ENCODE measurements at regions of chr11 and their contacts with region 1.

Region 1: GRCh38 chr11:107565219-107565937 is at the start of gene ALKBH8:
- DNase-seq: peak; percentile 74 to 86 (median 77)
- H3K4me3 ChIP-seq: peak within 1 kb of the TSS; percentile 68 to 73
- H3K4me3 Mint-ChIP-seq: peak within 1 kb of the TSS; percentile 94 to 98 (median 96)
- H3K27ac ChIP-seq: peak within 1 kb of the TSS; percentile 58
- H3K27ac Mint-ChIP-seq: peak within 1 kb of the TSS; percentile 89 to 97 (median 95)
- H3K4me1 ChIP-seq: peaks cover 28% of the 10 kb centered on the region
- H3K4me1 Mint-ChIP-seq: peaks cover 23 to 43% (median 40%) of the 10 kb centered on the region in 4 donors
- H3K27me3 ChIP-seq: no peaks in the 10 kb centered on the region
- H3K27me3 Mint-ChIP-seq: no peaks in the 10 kb centered on the region
- total RNA-seq, gene ALKBH8: 14.6 to 15.2 TPM

Region 2: DNA sequence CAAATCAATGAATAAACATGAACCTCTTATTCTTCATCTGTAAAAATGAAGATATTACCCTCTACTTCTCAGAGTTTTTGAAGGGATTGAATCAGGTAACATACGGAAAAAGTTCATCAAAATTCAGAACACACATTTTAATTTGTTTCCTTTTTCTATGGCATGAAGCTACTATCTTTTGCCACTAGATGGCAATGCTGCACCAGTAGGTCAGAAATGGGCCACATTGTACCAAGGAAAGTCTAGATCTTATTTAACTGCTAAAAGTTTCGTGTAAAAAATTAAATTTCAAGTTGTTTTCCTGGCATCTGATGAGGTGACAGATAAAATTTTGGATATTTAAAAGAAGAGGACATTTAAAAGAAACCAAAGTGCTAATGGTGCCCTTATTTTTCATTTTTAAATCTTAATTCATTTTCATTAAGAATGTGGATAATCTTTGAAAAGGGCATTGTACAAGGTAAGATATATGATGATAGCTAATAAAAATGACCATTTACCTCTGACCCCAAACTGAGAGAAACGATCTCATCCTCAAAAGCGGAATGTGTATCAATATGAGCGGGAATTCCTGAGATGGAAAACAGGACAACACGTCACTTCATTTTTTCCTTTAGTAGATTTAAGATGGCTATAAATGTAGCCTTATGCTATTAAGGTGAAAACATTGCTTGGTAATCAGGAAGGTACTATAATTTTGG is 16.0 kb before region 1 on chr11:
- CTCF ChIA-PET with region 1: interaction called, 76 read pairs
- POLR2A ChIA-PET with region 1: no interaction called
- intact Hi-C with region 1: no loop called
- DNase-seq: peak in 4 of 5 donors; percentile 32 to 43 (median 36)
- H3K4me3 ChIP-seq: no peak overlapping the region
- H3K4me3 Mint-ChIP-seq: no peak overlapping the region
- H3K27ac ChIP-seq: no peak overlapping the region
- H3K27ac Mint-ChIP-seq: no peak overlapping the region
- H3K4me1 ChIP-seq: no peaks in the 10 kb centered on the region
- H3K4me1 Mint-ChIP-seq: peaks cover 0 to 4% (median 0%) of the 10 kb centered on the region in 4 donors
- H3K27me3 ChIP-seq: no peaks in the 10 kb centered on the region
- H3K27me3 Mint-ChIP-seq: no peaks in the 10 kb centered on the region

Region 3: DNA sequence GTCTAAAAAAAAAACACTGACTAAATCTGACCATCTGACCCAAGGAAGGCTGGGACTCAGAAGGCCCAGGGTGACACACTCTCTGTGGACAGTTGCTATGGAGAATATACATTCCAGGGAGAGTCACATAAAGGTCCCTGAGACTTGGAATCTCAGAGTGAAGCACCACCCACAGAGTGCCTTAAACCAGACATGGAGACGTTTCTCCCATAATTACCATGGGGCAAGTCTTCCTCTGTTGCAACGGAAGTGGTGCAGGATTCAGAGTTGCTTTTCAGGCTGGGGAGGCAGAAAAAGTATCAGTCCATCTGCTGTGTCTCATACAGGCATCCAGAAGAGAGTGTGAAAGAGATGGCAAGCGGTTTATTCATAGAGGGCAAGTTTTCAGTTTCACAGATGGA is 205.2 kb after region 1 on chr11:
- CTCF ChIA-PET with region 1: interaction called, 7 read pairs
- POLR2A ChIA-PET with region 1: no interaction called
- intact Hi-C with region 1: loop called (anchors 1 kb)
- DNase-seq: no peak
- H3K4me3 ChIP-seq: no peak overlapping the region
- H3K4me3 Mint-ChIP-seq: no peak overlapping the region
- H3K27ac ChIP-seq: no peak overlapping the region
- H3K27ac Mint-ChIP-seq: no peak overlapping the region
- H3K4me1 ChIP-seq: no peaks in the 10 kb centered on the region
- H3K4me1 Mint-ChIP-seq: no peaks in the 10 kb centered on the region
- H3K27me3 ChIP-seq: no peaks in the 10 kb centered on the region
- H3K27me3 Mint-ChIP-seq: peaks cover 3 to 16% of the 10 kb centered on the region in 2 donors

Region 4: DNA sequence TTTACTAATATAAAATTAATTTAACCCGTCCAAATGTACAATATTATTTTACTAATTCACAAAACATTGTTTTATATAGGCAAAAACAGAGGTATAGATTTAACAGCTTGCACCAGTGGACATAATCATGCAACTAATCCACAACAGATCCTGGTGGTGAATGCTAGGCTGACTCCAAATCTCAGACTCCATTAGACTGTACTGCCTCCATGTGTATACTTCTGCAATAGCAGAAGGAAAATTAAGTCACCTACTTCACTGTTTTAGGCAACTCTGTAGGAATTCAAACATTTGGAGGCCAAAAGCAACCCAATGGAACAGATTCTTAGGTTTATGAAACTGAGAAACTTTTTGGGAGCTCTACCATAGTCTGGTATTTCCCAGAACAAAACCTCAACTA is 332.9 kb after region 1 on chr11:
- CTCF ChIA-PET with region 1: interaction called, 6 read pairs
- POLR2A ChIA-PET with region 1: no interaction called
- intact Hi-C with region 1: loop called (anchors 1 kb)
- DNase-seq: peak in 4 of 5 donors; percentile 9 to 32 (median 23)
- H3K4me3 ChIP-seq: no peak overlapping the region
- H3K4me3 Mint-ChIP-seq: no peak overlapping the region
- H3K27ac ChIP-seq: no peak overlapping the region
- H3K27ac Mint-ChIP-seq: no peak overlapping the region
- H3K4me1 ChIP-seq: no peaks in the 10 kb centered on the region
- H3K4me1 Mint-ChIP-seq: no peaks in the 10 kb centered on the region
- H3K27me3 ChIP-seq: no peaks in the 10 kb centered on the region
- H3K27me3 Mint-ChIP-seq: peaks cover 0 to 9% of the 10 kb centered on the region in 2 donors

Region 5: GRCh38 chr11:108467091-108467823 is 901.9 kb after region 1 on chr11 and contains the start of gene C11orf65:
- CTCF ChIA-PET with region 1: no interaction called
- POLR2A ChIA-PET with region 1: no interaction called
- intact Hi-C with region 1: loop called (anchors 10 kb)
- DNase-seq: peak; percentile 96 to 97 (median 97)
- H3K4me3 ChIP-seq: peak within 1 kb of the TSS; percentile 40 to 94
- H3K4me3 Mint-ChIP-seq: peak within 1 kb of the TSS; percentile 96 to 100 (median 97)
- H3K27ac ChIP-seq: peak within 1 kb of the TSS; percentile 95
- H3K27ac Mint-ChIP-seq: peak within 1 kb of the TSS; percentile 97 to 100 (median 100)
- H3K4me1 ChIP-seq: peaks cover 8% of the 10 kb centered on the region
- H3K4me1 Mint-ChIP-seq: peaks cover 5 to 16% (median 9%) of the 10 kb centered on the region in 4 donors
- H3K27me3 ChIP-seq: no peaks in the 10 kb centered on the region
- H3K27me3 Mint-ChIP-seq: no peaks in the 10 kb centered on the region
- total RNA-seq, gene C11orf65: 0.30 to 0.93 TPM

Region 6: DNA sequence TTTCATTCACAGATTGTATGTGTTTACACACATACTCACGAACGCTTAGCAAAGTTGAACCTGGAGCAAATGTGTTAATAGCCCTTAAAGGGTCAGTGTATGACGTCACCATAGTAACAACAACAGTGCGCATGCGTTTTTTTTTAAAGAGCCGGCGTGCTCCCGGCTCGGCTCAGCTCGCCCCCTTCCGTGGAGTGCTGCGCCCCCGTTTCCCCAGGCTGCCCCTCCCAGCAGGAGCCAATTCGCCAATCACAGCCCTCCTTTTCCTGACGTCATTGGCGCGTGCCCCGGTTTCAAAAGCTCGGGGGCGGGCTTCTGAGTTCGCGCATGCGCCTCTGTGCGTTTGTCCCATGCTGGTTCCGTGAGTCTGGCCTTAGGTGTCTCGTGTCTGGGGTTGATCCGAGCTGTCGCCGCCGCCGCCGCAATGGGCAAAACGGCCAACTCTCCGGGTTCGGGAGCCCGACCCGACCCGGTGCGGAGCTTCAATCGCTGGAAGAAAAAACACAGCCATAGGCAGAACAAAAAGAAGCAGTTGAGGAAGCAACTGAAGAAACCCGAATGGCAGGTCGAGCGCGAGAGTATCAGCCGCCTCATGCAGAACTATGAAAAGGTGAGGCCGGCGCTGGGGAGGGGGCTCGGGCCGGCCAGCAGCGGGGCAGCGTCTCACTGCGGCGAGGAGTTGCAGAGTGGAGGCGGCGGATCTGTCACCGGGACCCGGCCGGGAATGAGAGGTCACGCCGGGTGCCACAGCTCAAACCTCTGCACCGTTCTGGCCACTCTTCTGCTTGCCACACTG is 1099.5 kb after region 1 on chr11 and contains the start of gene DDX10:
- CTCF ChIA-PET with region 1: interaction called, 3 read pairs
- POLR2A ChIA-PET with region 1: no interaction called
- intact Hi-C with region 1: loop called (anchors 2 kb)
- DNase-seq: peak; percentile 97 to 99 (median 98)
- H3K4me3 ChIP-seq: peak within 1 kb of the TSS; percentile 66 to 71
- H3K4me3 Mint-ChIP-seq: peak within 1 kb of the TSS; percentile 98 to 100 (median 100)
- H3K27ac ChIP-seq: peak within 1 kb of the TSS; percentile 64
- H3K27ac Mint-ChIP-seq: peak within 1 kb of the TSS; percentile 94 to 100 (median 99)
- H3K4me1 ChIP-seq: peaks cover 32% of the 10 kb centered on the region
- H3K4me1 Mint-ChIP-seq: peaks cover 32 to 56% (median 45%) of the 10 kb centered on the region in 4 donors
- H3K27me3 ChIP-seq: no peaks in the 10 kb centered on the region
- H3K27me3 Mint-ChIP-seq: no peaks in the 10 kb centered on the region
- total RNA-seq, gene DDX10: 17.4 to 18.2 TPM